Mammary epithelial cell (primary cell): ENCODE measurements at regions of chr15 and their contacts with region 1.

Region 1: GRCh38 chr15:74525946-74526345 is 15.1 kb upstream of the ARID3B start:
- DNase-seq: peak; percentile 90
- H3K4me3 ChIP-seq: no peak overlapping the region
- H3K27ac ChIP-seq: peak overlapping the region; percentile 58
- H3K4me1 ChIP-seq: peaks cover 48% of the 10 kb centered on the region
- H3K27me3 ChIP-seq: no peaks in the 10 kb centered on the region
- CTCF ChIP-seq: no peak

Region 2: GRCh38 chr15:74540761-74541493 is 15.0 kb after region 1 on chr15 and contains the start of gene ARID3B:
- CTCF ChIA-PET with region 1: interaction called, 5 read pairs
- dilution Hi-C with region 1: no loop called
- in situ Hi-C with region 1: no loop called
- intact Hi-C with region 1: loop called (anchors 1 kb)
- DNase-seq: peak; percentile 96
- H3K4me3 ChIP-seq: peak within 1 kb of the TSS; percentile 86 to 95 (median 95)
- H3K27ac ChIP-seq: peak within 1 kb of the TSS; percentile 90
- H3K4me1 ChIP-seq: peaks cover 39% of the 10 kb centered on the region
- H3K27me3 ChIP-seq: no peaks in the 10 kb centered on the region
- CTCF ChIP-seq: no peak
- total RNA-seq, gene ARID3B: 7.0 to 12.8 TPM

Region 3: DNA sequence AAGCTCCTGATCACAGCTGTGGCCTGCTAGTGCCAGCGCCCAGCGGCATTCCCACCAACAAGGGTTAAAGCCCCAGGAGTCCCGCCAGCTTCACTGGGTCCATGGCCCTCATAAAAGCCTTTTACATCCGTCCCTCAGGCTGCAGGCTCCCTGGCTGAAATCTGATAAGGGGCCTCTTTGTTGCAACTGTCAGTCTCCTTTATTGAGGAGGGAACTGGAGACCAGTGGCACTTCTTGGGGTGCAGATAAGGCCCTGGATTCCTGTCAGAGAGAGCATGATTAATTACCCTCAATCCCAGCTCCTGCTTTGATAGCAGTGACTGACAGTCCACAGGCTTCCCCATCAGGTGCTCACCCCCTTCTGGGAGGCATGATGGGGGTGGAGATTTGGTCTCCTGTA is 58.8 kb after region 1 on chr15:
- CTCF ChIA-PET with region 1: no interaction called
- dilution Hi-C with region 1: no loop called
- in situ Hi-C with region 1: no loop called
- intact Hi-C with region 1: no loop called
- DNase-seq: no peak
- H3K4me3 ChIP-seq: no peak overlapping the region
- H3K27ac ChIP-seq: no peak overlapping the region
- H3K4me1 ChIP-seq: peaks cover 29% of the 10 kb centered on the region
- H3K27me3 ChIP-seq: no peaks in the 10 kb centered on the region
- CTCF ChIP-seq: no peak

Region 4: GRCh38 chr15:74626752-74627692 is 101.1 kb after region 1 on chr15:
- CTCF ChIA-PET with region 1: interaction called, 3 read pairs
- dilution Hi-C with region 1: loop called (anchors 5 kb)
- in situ Hi-C with region 1: no loop called
- intact Hi-C with region 1: no loop called
- DNase-seq: no peak
- H3K4me3 ChIP-seq: no peak overlapping the region
- H3K27ac ChIP-seq: no peak overlapping the region
- H3K4me1 ChIP-seq: no peaks in the 10 kb centered on the region
- H3K27me3 ChIP-seq: no peaks in the 10 kb centered on the region
- CTCF ChIP-seq: no peak

Region 5: GRCh38 chr15:74682954-74683353 is 157.0 kb after region 1 on chr15:
- CTCF ChIA-PET with region 1: no interaction called
- dilution Hi-C with region 1: no loop called
- in situ Hi-C with region 1: no loop called
- intact Hi-C with region 1: no loop called
- DNase-seq: no peak
- H3K4me3 ChIP-seq: no peak overlapping the region
- H3K27ac ChIP-seq: no peak overlapping the region
- H3K4me1 ChIP-seq: no peaks in the 10 kb centered on the region
- H3K27me3 ChIP-seq: no peaks in the 10 kb centered on the region
- CTCF ChIP-seq: no peak

Region 6: GRCh38 chr15:74709011-74709410 is 183.1 kb after region 1 on chr15:
- CTCF ChIA-PET with region 1: no interaction called
- dilution Hi-C with region 1: no loop called
- in situ Hi-C with region 1: no loop called
- intact Hi-C with region 1: no loop called
- DNase-seq: no peak
- H3K4me3 ChIP-seq: no peak overlapping the region
- H3K27ac ChIP-seq: no peak overlapping the region
- H3K4me1 ChIP-seq: no peaks in the 10 kb centered on the region
- H3K27me3 ChIP-seq: no peaks in the 10 kb centered on the region
- CTCF ChIP-seq: no peak